ENCODE measurements at regions of chr20 and their contacts with region 1.

Region 1: GRCh38 chr20:52083627-52084232 is 107.8 kb downstream of the ZFP64 start:
- DNase-seq: no peak
- ATAC-seq: peak; percentile 40
- H3K4me3 ChIP-seq: no peak overlapping the region
- H3K4me3 Mint-ChIP-seq: no peak overlapping the region
- H3K27ac ChIP-seq: no peak overlapping the region
- H3K27ac Mint-ChIP-seq: peak overlapping the region in 2 of 9 donors; percentile 22 to 42
- H3K4me1 ChIP-seq: peaks cover 0 to 20% of the 10 kb centered on the region in 2 donors
- H3K4me1 Mint-ChIP-seq: peaks cover 0 to 16% (median 6%) of the 10 kb centered on the region in 7 donors
- H3K27me3 ChIP-seq: no peaks in the 10 kb centered on the region
- H3K27me3 Mint-ChIP-seq: no peaks in the 10 kb centered on the region

Region 2: GRCh38 chr20:51639206-51639832 is 444.4 kb before region 1 on chr20:
- CTCF ChIA-PET with region 1: no interaction called
- POLR2A ChIA-PET with region 1: no interaction called
- intact Hi-C with region 1: loop called in 1 of 2 experiments (anchors 1 kb)
- DNase-seq: peak in 4 of 9 donors; percentile 3 to 55 (median 11)
- ATAC-seq: peak; percentile 79
- H3K4me3 ChIP-seq: no peak overlapping the region
- H3K4me3 Mint-ChIP-seq: no peak overlapping the region
- H3K27ac ChIP-seq: no peak overlapping the region
- H3K27ac Mint-ChIP-seq: no peak overlapping the region
- H3K4me1 ChIP-seq: no peaks in the 10 kb centered on the region
- H3K4me1 Mint-ChIP-seq: no peaks in the 10 kb centered on the region
- H3K27me3 ChIP-seq: no peaks in the 10 kb centered on the region
- H3K27me3 Mint-ChIP-seq: no peaks in the 10 kb centered on the region

Region 3: GRCh38 chr20:51695574-51696303 is 388.0 kb before region 1 on chr20:
- CTCF ChIA-PET with region 1: no interaction called
- POLR2A ChIA-PET with region 1: no interaction called
- intact Hi-C with region 1: loop called (anchors 1 to 2 kb)
- DNase-seq: peak in 1 of 9 donors; percentile 25
- ATAC-seq: no peak
- H3K4me3 ChIP-seq: no peak overlapping the region
- H3K4me3 Mint-ChIP-seq: peak overlapping the region in 3 of 10 donors; percentile 0 to 35 (median 2)
- H3K27ac ChIP-seq: no peak overlapping the region
- H3K27ac Mint-ChIP-seq: peak overlapping the region in 1 of 9 donors; percentile 18
- H3K4me1 ChIP-seq: peaks cover 0 to 5% of the 10 kb centered on the region in 2 donors
- H3K4me1 Mint-ChIP-seq: peaks cover 4 to 21% (median 13%) of the 10 kb centered on the region in 7 donors
- H3K27me3 ChIP-seq: no peaks in the 10 kb centered on the region
- H3K27me3 Mint-ChIP-seq: peaks cover 14 to 34% (median 21%) of the 10 kb centered on the region in 5 donors

Region 4: GRCh38 chr20:51800060-51800794 is 283.5 kb before region 1 on chr20:
- CTCF ChIA-PET with region 1: no interaction called
- POLR2A ChIA-PET with region 1: no interaction called
- intact Hi-C with region 1: loop called in 1 of 2 experiments (anchors 1 kb)
- DNase-seq: peak in 8 of 9 donors; percentile 7 to 79 (median 26)
- ATAC-seq: peak; percentile 54
- H3K4me3 ChIP-seq: peak overlapping the region; percentile 20
- H3K4me3 Mint-ChIP-seq: peak overlapping the region in 8 of 10 donors; percentile 27 to 80 (median 40)
- H3K27ac ChIP-seq: no peak overlapping the region
- H3K27ac Mint-ChIP-seq: peak overlapping the region in 1 of 9 donors; percentile 49
- H3K4me1 ChIP-seq: no peaks in the 10 kb centered on the region
- H3K4me1 Mint-ChIP-seq: peaks cover 5 to 18% (median 16%) of the 10 kb centered on the region in 7 donors
- H3K27me3 ChIP-seq: peaks cover 0 to 10% of the 10 kb centered on the region in 2 donors
- H3K27me3 Mint-ChIP-seq: peaks cover 47 to 75% (median 65%) of the 10 kb centered on the region in 5 donors

Measured in naive thymus-derived CD4-positive, alpha-beta T cell (primary cell).